ENCODE measurements at regions of chr7 and their contacts with region 1.

Region 1: GRCh38 chr7:21767300-21767900 is 178.3 kb downstream of the CDCA7L start:
- DNase-seq: peak; percentile 35
- H3K4me3 Mint-ChIP-seq: no peak overlapping the region
- H3K27ac Mint-ChIP-seq: no peak overlapping the region
- H3K4me1 Mint-ChIP-seq: peaks cover 4% of the 10 kb centered on the region
- H3K27me3 Mint-ChIP-seq: peaks cover 31% of the 10 kb centered on the region

Region 2: GRCh38 chr7:20777377-20778062 is 989.9 kb before region 1 on chr7:
- intact Hi-C with region 1: loop called (anchors 2 kb)
- DNase-seq: no peak
- H3K4me3 Mint-ChIP-seq: peak overlapping the region; percentile 20
- H3K27ac Mint-ChIP-seq: no peak overlapping the region
- H3K4me1 Mint-ChIP-seq: peaks cover 5% of the 10 kb centered on the region
- H3K27me3 Mint-ChIP-seq: peaks cover 67% of the 10 kb centered on the region

Region 3: DNA sequence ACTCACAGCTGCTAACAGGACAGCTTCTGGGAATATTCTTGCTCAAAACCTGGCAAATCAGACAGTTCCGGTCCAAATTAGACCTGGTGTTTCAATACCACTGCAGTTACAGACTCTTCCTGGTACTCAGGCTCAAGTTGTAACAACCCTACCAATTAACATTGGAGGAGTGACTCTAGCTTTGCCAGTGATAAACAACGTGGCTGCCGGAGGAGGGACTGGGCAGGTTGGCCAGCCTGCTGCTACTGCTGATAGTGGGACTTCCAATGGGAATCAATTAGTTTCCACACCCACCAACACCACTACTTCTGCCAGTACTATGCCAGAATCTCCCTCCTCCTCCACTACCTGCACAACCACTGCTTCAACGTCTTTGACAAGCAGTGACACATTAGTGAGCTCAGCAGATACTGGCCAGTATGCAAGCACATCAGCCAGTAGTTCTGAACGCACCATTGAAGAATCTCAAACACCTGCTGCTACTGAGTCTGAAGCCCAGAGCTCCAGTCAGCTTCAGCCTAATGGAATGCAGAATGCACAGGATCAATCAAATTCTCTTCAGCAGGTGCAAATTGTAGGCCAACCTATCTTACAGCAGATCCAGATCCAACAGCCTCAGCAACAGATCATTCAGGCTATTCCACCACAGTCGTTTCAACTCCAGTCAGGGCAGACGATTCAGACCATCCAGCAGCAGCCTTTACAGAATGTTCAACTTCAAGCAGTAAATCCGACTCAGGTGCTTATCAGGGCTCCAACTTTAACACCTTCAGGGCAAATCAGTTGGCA is 337.4 kb before region 1 on chr7:
- intact Hi-C with region 1: no loop called
- DNase-seq: no peak
- H3K4me3 Mint-ChIP-seq: peak overlapping the region; percentile 100
- H3K27ac Mint-ChIP-seq: peak overlapping the region; percentile 23
- H3K4me1 Mint-ChIP-seq: peaks cover 58% of the 10 kb centered on the region
- H3K27me3 Mint-ChIP-seq: no peaks in the 10 kb centered on the region

Region 4: DNA sequence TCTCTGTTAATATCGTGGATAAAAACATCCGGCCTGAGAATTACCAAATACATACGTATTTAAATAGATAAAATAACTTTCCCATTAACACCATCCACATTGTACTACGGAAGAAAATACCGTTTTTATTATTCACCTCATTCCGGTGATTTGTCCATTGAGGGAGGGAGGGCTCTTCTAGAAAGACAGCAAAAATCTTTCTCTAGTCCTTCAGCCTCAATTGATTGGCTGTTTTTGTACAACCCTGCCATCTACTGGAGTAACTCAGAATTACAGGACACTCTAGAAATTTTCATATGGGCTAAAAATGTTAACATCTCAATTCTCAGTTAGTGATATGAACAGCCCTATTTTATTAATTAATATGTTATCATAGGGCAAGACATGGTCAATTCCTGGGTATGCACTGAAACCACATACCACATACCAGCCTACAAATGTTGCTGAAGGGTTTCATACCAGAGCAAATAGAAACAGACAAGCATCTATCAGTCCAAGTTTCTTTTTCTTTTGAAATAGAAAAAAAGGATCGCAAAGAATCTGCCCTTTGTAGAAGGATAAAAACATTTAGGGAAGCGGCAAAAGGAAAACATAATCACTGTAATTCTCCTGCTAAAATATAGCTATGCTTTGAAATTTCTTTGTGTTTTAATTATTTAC is 234.1 kb after region 1 on chr7:
- intact Hi-C with region 1: loop called (anchors 10 kb)
- DNase-seq: no peak
- H3K4me3 Mint-ChIP-seq: no peak overlapping the region
- H3K27ac Mint-ChIP-seq: no peak overlapping the region
- H3K4me1 Mint-ChIP-seq: peaks cover 6% of the 10 kb centered on the region
- H3K27me3 Mint-ChIP-seq: peaks cover 17% of the 10 kb centered on the region

Region 5: GRCh38 chr7:22179442-22179879 is 412.1 kb after region 1 on chr7:
- intact Hi-C with region 1: no loop called
- DNase-seq: no peak
- H3K4me3 Mint-ChIP-seq: no peak overlapping the region
- H3K27ac Mint-ChIP-seq: no peak overlapping the region
- H3K4me1 Mint-ChIP-seq: peaks cover 22% of the 10 kb centered on the region
- H3K27me3 Mint-ChIP-seq: peaks cover 14% of the 10 kb centered on the region

Measured in activated T-helper 2 cell treated with anti-CD3 and anti-CD28 coated beads, Interferon-gamma antibody, Interleukin-2, Interleukin-4, amounts not matched to agents 10 μg/mL and 5 μg/mL and 100 μg/mL, durations not matched to agents 14 hours and 24 hours and 36 hours (primary cell).